HAP-1 (cell line): ENCODE measurements at regions of chr1 and their contacts with region 1.

Region 1: DNA sequence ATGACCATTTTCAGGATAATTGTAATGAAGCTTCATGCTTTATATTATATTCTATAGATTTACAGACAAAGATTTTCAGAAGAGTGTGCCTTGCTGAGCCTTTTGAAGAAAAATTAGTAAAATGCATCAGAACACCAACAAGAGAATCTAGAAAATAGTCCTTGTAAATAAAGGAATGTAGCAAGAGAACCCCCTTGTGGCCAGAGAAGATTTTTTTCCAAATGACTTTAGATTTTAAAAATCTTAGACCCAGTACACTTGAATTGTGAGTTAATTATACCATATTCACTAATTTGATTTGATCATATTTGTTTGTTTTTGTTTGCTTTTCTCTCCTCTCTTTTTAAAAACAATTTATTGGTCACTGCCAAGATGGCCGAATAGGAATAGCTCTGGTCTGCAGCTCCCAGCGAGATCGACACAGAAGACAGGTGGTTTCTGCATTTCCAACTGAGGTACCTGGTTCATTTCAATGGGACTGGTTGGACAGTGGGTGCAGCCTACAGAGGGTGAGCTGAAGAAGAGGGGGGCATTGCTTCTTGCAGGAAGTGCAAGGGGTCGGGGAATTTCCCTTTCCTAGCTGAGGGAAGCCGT is 12.8 kb upstream of the IFI44L start:
- DNase-seq: no peak
- H3K4me3 ChIP-seq: no peak overlapping the region
- H3K4me1 ChIP-seq: no peaks in the 10 kb centered on the region
- H3K27me3 ChIP-seq: no peaks in the 10 kb centered on the region

Region 2: DNA sequence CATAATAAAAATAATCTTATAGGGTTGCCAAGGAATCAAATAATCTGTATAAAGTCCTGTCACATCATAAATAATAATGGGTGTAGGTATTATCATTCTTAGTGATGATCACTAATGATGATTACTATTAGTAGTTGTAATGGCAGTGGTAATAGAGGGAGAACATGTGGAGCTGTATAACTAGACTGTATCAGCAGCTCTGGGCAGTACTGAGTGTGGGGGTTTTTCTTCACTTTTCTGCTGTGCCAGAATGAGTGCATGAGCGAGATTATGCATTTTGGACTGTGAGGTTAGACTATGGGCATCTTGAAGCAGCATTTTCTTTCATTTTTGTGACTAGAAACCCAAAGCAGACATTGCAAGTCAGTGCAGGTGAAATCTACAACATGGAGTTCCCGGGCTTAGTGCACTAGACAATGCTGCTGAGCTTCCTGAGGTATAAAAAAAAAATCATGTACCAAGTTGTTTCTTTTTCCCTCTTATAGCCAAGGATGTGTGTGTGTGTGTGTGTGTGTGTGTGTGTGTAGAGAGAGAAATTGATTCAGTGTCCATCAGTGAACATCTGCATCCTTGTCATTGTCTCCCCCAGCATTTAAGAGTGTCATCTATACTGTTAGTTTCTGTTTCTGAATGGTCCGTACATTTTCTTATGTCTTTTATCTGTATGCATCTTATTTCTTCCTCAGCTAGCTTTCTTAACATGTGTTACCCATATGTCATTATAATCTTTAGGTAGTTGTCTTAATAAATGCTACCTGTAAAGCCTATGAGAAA is 475.1 kb before region 1 on chr1:
- in situ Hi-C with region 1: loop called (anchors 10 kb)
- DNase-seq: no peak
- H3K4me3 ChIP-seq: no peak overlapping the region
- H3K4me1 ChIP-seq: no peaks in the 10 kb centered on the region
- H3K27me3 ChIP-seq: peaks cover 14% of the 10 kb centered on the region

Region 3: DNA sequence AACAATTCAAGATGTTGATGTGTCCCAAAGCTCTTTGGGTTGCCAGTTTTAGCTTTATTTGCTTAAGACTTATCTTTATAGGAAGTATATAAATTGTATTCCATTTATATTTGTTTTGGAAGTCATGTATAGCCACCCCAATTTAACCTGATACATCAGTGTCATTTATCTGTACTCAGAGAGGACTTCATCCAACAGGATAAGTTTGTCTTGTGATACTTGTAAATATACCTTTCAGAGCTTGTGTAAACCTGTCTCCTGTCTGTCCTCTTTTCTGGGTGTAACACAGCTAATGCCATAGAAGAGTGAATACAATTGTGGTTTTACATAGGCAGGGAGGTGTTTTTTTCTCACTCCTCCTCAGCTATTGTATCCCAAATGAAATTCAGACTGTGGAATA is 106.2 kb before region 1 on chr1:
- in situ Hi-C with region 1: no loop called
- DNase-seq: no peak
- H3K4me3 ChIP-seq: no peak overlapping the region
- H3K4me1 ChIP-seq: no peaks in the 10 kb centered on the region
- H3K27me3 ChIP-seq: no peaks in the 10 kb centered on the region